Panc1 (cell line): ENCODE measurements at regions of chr22 and their contacts with region 1.

Region 1: GRCh38 chr22:38051900-38052862 is 5.0 kb upstream of the PICK1 start:
- DNase-seq: peak; percentile 39
- ATAC-seq: peak; percentile 88
- H3K4me3 ChIP-seq: no peak overlapping the region
- H3K27ac ChIP-seq: no peak overlapping the region; the same call in 1 of the 2 replicates
- H3K4me1 ChIP-seq: no peaks in the 10 kb centered on the region
- H3K27me3 ChIP-seq: no peaks in the 10 kb centered on the region
- CTCF ChIP-seq: peak; percentile 86

Region 2: DNA sequence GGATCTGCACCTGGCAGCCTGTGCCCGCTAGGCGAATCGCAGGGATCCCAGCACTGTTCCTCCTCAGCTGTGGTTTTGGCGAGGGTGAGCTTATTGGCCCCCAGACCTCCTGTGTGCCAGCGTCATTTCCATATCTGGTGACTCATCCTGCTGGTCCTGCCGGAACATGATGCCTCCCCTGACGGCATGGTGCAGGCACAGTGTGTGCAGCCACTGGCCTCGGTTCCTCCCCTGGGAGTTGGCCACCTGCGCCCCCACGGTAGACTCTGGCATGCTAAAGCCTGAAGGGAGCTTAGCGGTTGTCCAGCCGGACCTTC is 52.3 kb before region 1 on chr22:
- CTCF ChIA-PET with region 1: no interaction called
- POLR2A ChIA-PET with region 1: no interaction called
- in situ Hi-C with region 1: no loop called
- intact Hi-C with region 1: no loop called
- DNase-seq: no peak
- ATAC-seq: no peak
- H3K4me3 ChIP-seq: no peak overlapping the region
- H3K27ac ChIP-seq: no peak overlapping the region
- H3K4me1 ChIP-seq: no peaks in the 10 kb centered on the region
- H3K27me3 ChIP-seq: no peaks in the 10 kb centered on the region
- CTCF ChIP-seq: no peak

Region 3: GRCh38 chr22:38012604-38013072 is 39.5 kb before region 1 on chr22:
- CTCF ChIA-PET with region 1: no interaction called
- POLR2A ChIA-PET with region 1: no interaction called
- in situ Hi-C with region 1: no loop called
- intact Hi-C with region 1: no loop called
- DNase-seq: no peak
- ATAC-seq: no peak
- H3K4me3 ChIP-seq: no peak overlapping the region
- H3K27ac ChIP-seq: no peak overlapping the region
- H3K4me1 ChIP-seq: no peaks in the 10 kb centered on the region
- H3K27me3 ChIP-seq: no peaks in the 10 kb centered on the region
- CTCF ChIP-seq: no peak

Region 4: DNA sequence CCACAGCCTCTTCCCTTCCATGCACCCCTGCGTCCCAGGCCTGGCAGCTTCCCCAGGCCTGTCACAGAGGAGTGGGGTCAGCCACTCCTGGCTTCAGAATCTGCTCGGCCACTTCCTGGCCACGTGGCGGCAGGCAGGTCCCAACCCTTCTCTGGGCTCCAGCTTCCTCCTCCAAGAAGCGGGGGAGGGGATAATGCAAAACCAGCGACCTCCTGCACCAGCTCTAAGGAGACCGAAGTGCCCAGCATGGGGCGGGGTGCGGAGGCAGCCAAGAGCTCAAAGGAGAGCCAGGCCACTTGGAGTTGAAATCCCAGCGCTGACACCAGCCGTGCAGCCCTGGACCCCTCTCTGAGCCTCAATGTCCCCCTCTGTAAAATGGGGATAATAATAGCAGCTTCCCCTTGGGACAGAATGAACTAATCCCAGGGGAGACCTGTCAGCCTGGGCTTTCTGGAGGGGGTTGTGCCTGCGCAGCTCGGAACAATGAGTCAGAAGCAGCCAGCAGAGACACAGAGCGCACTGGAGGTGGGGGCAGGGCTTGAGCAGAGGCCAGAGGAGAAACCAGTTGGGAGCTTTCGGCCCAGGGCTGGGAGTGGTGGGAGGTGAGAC is 17.8 kb before region 1 on chr22:
- CTCF ChIA-PET with region 1: no interaction called
- POLR2A ChIA-PET with region 1: interaction called, 10 read pairs
- in situ Hi-C with region 1: no loop called
- intact Hi-C with region 1: no loop called
- DNase-seq: peak; percentile 10
- ATAC-seq: peak; percentile 92
- H3K4me3 ChIP-seq: no peak overlapping the region
- H3K27ac ChIP-seq: peak overlapping the region; percentile 71; the same call in 1 of the 2 replicates
- H3K4me1 ChIP-seq: peaks cover 13% of the 10 kb centered on the region
- H3K27me3 ChIP-seq: no peaks in the 10 kb centered on the region
- CTCF ChIP-seq: no peak